ENCODE measurements at regions of chr10 and their contacts with region 1.

Region 1: GRCh38 chr10:71092812-71093401 is 119.5 kb upstream of the UNC5B start:
- DNase-seq: peak in 1 of 2 donors; percentile 43
- ATAC-seq: peak; percentile 89 to 98
- H3K4me3 ChIP-seq: no peak overlapping the region
- H3K27ac ChIP-seq: peak overlapping the region in 1 of 4 donors; percentile 70
- H3K4me1 ChIP-seq: peaks cover 14 to 15% of the 10 kb centered on the region in 2 donors
- H3K27me3 ChIP-seq: no peaks in the 10 kb centered on the region
- CTCF ChIP-seq: no peak
- POLR2A ChIP-seq: no peak

Region 2: GRCh38 chr10:70672165-70673042 is 420.5 kb before region 1 on chr10 and contains the start of gene ADAMTS14:
- in situ Hi-C with region 1: no loop called
- intact Hi-C with region 1: no loop called
- DNase-seq: no peak
- ATAC-seq: peak in 1 of 2 donors; percentile 25
- H3K4me3 ChIP-seq: peak within 1 kb of the TSS in 3 of 4 donors; percentile 34 to 47 (median 34)
- H3K27ac ChIP-seq: no peak within 1 kb of the TSS
- H3K4me1 ChIP-seq: peaks cover 10 to 13% of the 10 kb centered on the region in 2 donors
- H3K27me3 ChIP-seq: peaks cover 0 to 19% (median 0%) of the 10 kb centered on the region in 3 donors
- CTCF ChIP-seq: no peak
- POLR2A ChIP-seq: no peak
- total RNA-seq, gene ADAMTS14: 0.10 TPM in 1 of 4 donors, not detected in the others

Region 3: DNA sequence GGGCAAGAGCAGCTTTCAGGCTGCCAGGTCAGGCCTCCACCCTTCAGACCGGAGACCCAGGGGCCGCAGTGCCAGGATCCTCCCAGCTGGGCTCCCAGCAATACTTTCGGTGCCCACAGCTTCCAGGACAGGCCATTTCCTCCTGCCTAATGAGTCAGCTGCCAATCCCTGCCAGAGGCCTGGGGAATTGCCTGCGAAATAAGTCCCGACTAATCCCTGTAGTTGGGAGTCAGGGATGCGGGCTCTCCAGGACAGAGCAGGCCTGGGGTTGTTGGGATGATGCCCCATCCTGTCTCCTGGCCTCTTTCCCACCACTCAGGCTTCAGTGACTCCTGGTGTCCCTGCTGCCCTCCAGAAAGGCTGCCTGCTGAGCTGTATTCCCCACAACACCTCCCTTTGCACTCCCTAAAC is 24.0 kb before region 1 on chr10:
- in situ Hi-C with region 1: no loop called
- intact Hi-C with region 1: loop called (anchors 1 kb)
- DNase-seq: peak; percentile 49 to 67
- ATAC-seq: peak; percentile 75 to 91
- H3K4me3 ChIP-seq: no peak overlapping the region
- H3K27ac ChIP-seq: peak overlapping the region; percentile 7 to 74 (median 54)
- H3K4me1 ChIP-seq: peaks cover 16 to 24% of the 10 kb centered on the region in 2 donors
- H3K27me3 ChIP-seq: no peaks in the 10 kb centered on the region
- CTCF ChIP-seq: no peak
- POLR2A ChIP-seq: no peak

Region 4: GRCh38 chr10:71359364-71360046 is 266.6 kb after region 1 on chr10:
- in situ Hi-C with region 1: no loop called
- intact Hi-C with region 1: no loop called
- DNase-seq: no peak
- ATAC-seq: no peak
- H3K4me3 ChIP-seq: no peak overlapping the region
- H3K27ac ChIP-seq: no peak overlapping the region
- H3K4me1 ChIP-seq: no peaks in the 10 kb centered on the region
- H3K27me3 ChIP-seq: no peaks in the 10 kb centered on the region
- CTCF ChIP-seq: no peak
- POLR2A ChIP-seq: no peak